ENCODE measurements at regions of chr13 and their contacts with region 1.

Region 1: DNA sequence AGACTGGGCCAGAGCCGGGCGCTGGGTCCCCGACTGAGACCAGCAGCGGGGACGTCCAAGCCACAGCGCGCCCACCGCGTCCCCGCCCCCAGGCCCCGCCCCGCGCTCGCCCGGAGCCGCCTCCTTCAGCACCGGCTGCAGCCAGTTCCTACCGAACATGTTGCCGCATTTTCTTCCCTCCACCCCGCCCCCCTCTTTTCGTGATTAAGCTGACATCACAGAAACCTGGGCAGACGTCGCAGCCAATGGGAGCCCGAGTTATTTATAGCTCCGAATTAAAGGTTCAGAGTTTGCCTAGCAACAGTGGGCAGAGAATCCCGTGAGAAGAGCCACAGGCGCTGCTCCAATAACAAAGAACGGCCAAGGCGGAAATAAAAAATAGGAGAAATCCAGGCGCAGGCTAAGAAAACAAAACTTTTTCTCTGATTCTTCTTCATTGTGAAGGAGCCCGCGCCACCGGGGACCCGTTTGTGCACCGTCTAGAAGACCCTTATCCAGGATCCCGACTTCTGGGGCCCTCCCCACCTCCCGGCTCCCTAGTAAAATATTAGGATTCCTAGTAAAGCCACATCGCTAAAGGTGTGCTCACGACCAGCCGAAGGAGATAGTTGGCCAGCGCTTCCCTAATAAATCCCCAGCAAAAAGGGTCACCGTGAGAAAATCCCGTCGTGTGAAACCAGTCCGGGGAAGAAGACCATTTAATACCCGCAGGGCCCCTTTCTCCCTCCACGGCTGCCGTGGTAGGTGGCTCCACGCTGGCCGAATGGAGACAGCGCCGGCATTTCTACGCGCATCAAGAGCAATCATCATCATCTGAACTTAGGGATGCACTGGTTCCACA is 61.7 kb downstream of the SERP2 start:
- DNase-seq: peak; percentile 95 to 99
- H3K4me3 ChIP-seq: peak overlapping the region; percentile 91
- H3K4me3 Mint-ChIP-seq: peak overlapping the region; percentile 93
- H3K27ac Mint-ChIP-seq: peak overlapping the region; percentile 98
- H3K4me1 ChIP-seq: peaks cover 50% of the 10 kb centered on the region
- H3K4me1 Mint-ChIP-seq: peaks cover 48% of the 10 kb centered on the region
- H3K27me3 ChIP-seq: no peaks in the 10 kb centered on the region
- H3K27me3 Mint-ChIP-seq: no peaks in the 10 kb centered on the region
- CTCF ChIP-seq: no peak

Region 2: GRCh38 chr13:43905435-43906031 is 529.8 kb before region 1 on chr13:
- CTCF ChIA-PET with region 1: interaction called, 8 read pairs
- POLR2A ChIA-PET with region 1: interaction called, 6 read pairs
- intact Hi-C with region 1: loop called (anchors 1 kb)
- DNase-seq: peak in 1 of 2 experiments; percentile 63
- H3K4me3 ChIP-seq: no peak overlapping the region
- H3K4me3 Mint-ChIP-seq: no peak overlapping the region
- H3K27ac Mint-ChIP-seq: no peak overlapping the region
- H3K4me1 ChIP-seq: no peaks in the 10 kb centered on the region
- H3K4me1 Mint-ChIP-seq: peaks cover 7% of the 10 kb centered on the region
- H3K27me3 ChIP-seq: no peaks in the 10 kb centered on the region
- H3K27me3 Mint-ChIP-seq: peaks cover 2% of the 10 kb centered on the region
- CTCF ChIP-seq: peak; percentile 63 to 86

Region 3: DNA sequence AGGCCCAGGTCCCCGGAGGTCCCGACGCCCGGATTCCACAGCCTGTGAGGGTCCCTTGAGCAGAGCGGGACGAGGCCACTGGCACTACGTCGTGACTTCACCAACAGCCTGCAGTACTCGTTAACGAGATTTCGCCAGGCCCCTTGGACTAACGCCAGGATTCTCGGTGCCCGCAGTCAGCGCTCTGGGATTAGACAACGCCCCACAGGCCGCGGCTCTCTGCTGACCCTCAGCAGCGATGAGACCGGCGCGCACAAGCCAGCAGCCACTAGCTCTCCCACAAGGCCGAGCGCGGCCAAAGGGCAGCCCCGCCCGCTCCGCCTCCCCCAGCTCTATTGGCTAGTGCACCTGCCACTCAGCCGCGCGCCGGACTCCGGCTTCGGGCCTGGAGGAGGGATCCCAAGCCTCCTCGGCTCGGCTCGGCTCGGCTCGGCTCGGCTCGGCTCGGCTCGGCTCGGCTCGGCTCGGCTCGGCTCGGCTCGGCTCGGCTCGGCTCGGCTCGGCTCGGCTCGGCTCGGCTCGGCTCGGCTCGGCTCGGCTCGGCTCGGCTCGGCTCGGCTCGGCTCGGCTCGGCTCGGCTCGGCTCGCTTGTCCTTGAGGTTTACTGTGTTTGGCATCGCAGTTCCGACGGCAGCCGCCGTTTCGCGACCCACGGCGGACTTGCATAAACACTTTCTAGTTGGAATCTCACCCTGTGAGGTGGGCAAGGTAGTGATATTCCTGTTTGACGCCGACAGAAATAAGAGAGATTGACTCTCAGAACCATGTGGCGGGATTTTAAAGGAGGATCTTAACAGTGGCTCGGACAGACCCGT is 293.4 kb before region 1 on chr13:
- CTCF ChIA-PET with region 1: interaction called, 8 read pairs
- POLR2A ChIA-PET with region 1: interaction called, 28 read pairs
- intact Hi-C with region 1: loop called (anchors 1 kb)
- DNase-seq: peak; percentile 98 to 100
- H3K4me3 ChIP-seq: peak overlapping the region; percentile 62
- H3K4me3 Mint-ChIP-seq: peak overlapping the region; percentile 83
- H3K27ac Mint-ChIP-seq: peak overlapping the region; percentile 94
- H3K4me1 ChIP-seq: peaks cover 28% of the 10 kb centered on the region
- H3K4me1 Mint-ChIP-seq: peaks cover 39% of the 10 kb centered on the region
- H3K27me3 ChIP-seq: no peaks in the 10 kb centered on the region
- H3K27me3 Mint-ChIP-seq: no peaks in the 10 kb centered on the region
- CTCF ChIP-seq: no peak

Region 4: GRCh38 chr13:44230736-44231135 is 204.6 kb before region 1 on chr13:
- CTCF ChIA-PET with region 1: interaction called, 11 read pairs
- POLR2A ChIA-PET with region 1: interaction called, 28 read pairs
- intact Hi-C with region 1: loop called (anchors 1 kb)
- DNase-seq: no peak
- H3K4me3 ChIP-seq: no peak overlapping the region
- H3K4me3 Mint-ChIP-seq: no peak overlapping the region
- H3K27ac Mint-ChIP-seq: no peak overlapping the region
- H3K4me1 ChIP-seq: peaks cover 45% of the 10 kb centered on the region
- H3K4me1 Mint-ChIP-seq: peaks cover 7% of the 10 kb centered on the region
- H3K27me3 ChIP-seq: no peaks in the 10 kb centered on the region
- H3K27me3 Mint-ChIP-seq: no peaks in the 10 kb centered on the region
- CTCF ChIP-seq: no peak

Region 5: DNA sequence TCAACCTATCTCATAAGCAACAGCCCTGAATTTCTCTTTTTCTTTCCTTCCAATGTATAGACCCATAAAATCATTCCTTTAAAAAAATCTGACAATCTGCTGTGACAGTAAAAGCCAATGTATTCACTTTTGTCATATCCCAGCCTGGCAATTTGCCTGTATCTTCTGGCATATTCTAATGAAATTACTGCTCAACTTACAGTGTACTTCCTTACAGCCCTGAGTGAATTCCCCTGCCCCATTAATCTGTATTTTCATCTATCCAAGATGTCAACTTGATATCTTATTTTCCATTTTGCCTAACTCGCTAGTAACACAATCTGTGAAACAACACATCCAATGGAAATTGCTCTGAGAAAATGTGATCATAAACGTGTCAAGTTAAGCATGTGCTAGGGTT is 79.7 kb before region 1 on chr13:
- CTCF ChIA-PET with region 1: no interaction called
- POLR2A ChIA-PET with region 1: interaction called, 13 read pairs
- intact Hi-C with region 1: no loop called
- DNase-seq: no peak
- H3K4me3 ChIP-seq: no peak overlapping the region
- H3K4me3 Mint-ChIP-seq: no peak overlapping the region
- H3K27ac Mint-ChIP-seq: peak overlapping the region; percentile 30
- H3K4me1 ChIP-seq: peaks cover 74% of the 10 kb centered on the region
- H3K4me1 Mint-ChIP-seq: peaks cover 36% of the 10 kb centered on the region
- H3K27me3 ChIP-seq: no peaks in the 10 kb centered on the region
- H3K27me3 Mint-ChIP-seq: no peaks in the 10 kb centered on the region
- CTCF ChIP-seq: no peak

Region 6: DNA sequence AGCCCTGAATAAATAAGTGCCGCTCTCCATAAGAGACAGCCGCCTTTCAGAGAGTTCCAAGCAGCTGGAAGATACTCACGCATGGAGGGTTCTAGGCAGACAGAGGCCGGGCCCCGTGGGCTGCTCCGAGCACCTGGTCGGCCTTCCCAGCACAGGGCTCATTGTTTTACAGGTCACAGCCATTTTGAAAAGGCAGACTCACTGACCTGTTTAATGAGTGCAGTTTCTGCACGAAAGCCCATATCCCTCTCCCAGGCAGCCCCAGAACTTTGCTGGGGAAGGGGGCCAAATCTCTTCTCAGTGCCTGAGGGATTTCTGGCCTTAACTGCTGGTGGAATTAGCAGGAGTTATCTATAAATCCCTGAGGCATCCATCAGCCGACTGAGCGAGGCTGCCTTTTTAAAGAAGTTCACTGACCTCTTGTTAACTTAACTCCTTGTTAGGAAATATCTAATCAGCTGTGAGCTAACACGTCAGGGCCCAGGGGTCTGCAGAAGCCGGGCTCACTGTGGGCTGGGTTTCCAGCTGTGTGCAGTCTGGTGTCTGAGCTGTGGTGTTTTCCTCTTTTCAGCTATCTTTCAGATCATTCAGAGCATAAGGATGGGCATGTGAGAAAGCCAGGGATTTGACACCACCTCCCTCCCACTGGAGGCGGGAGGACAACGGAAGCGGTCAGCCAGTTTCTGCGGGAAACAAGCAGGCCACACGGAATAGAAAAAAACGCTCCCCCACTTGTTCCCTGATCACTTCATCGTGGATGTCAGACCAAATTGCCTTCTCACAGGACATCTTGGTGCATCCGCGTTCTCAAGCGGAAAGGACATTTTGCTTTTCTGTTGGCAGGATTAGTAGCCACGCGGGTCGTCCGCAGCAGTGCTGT is 38.4 kb before region 1 on chr13:
- CTCF ChIA-PET with region 1: no interaction called
- POLR2A ChIA-PET with region 1: interaction called, 12 read pairs
- intact Hi-C with region 1: no loop called
- DNase-seq: peak; percentile 28 to 57
- H3K4me3 ChIP-seq: no peak overlapping the region
- H3K4me3 Mint-ChIP-seq: no peak overlapping the region
- H3K27ac Mint-ChIP-seq: peak overlapping the region; percentile 37
- H3K4me1 ChIP-seq: peaks cover 28% of the 10 kb centered on the region
- H3K4me1 Mint-ChIP-seq: peaks cover 18% of the 10 kb centered on the region
- H3K27me3 ChIP-seq: no peaks in the 10 kb centered on the region
- H3K27me3 Mint-ChIP-seq: no peaks in the 10 kb centered on the region
- CTCF ChIP-seq: no peak

Region 7: DNA sequence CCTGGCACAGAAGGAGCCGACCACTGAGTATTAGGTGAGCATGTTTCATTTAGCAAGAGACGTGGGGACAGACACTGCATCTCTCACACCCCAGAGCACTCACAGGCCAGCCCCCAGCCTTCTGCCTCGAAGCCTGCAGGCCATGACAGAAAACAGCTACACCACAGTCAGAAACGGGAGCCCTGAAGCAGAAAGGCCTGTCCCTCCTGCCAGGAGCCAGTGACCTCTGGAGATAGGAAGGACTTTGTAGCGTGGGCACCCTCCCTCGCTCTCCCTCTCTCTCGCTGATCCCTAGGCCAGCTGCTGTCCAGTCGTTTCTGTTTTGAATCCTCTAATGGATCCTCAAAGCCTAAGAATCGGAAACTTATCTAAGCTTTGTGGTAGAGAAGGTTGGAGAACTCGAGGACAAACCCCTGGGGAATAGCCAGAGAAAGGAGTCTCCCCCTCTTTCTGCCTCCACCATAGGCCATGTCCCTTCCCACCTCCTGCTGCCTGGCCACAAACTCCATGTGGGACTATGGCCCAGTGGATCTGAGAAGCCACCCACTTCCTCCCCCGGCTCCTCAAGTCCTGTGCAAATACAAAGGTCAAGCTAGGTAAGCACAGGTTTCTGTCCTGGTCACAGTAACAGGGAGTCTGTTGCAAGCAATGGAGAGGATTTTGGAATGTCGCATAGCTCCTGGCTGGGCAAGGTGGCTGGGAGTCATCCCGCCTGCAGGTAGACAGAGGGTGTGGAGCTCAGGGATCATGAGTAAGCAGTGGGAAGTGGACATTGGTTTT is 458.8 kb after region 1 on chr13:
- CTCF ChIA-PET with region 1: no interaction called
- POLR2A ChIA-PET with region 1: interaction called, 11 read pairs
- intact Hi-C with region 1: no loop called
- DNase-seq: peak; percentile 79 to 88
- H3K4me3 ChIP-seq: no peak overlapping the region
- H3K4me3 Mint-ChIP-seq: no peak overlapping the region
- H3K27ac Mint-ChIP-seq: peak overlapping the region; percentile 86
- H3K4me1 ChIP-seq: peaks cover 21% of the 10 kb centered on the region
- H3K4me1 Mint-ChIP-seq: peaks cover 14% of the 10 kb centered on the region
- H3K27me3 ChIP-seq: no peaks in the 10 kb centered on the region
- H3K27me3 Mint-ChIP-seq: no peaks in the 10 kb centered on the region
- CTCF ChIP-seq: no peak

Measured in Caco-2 (cell line).